ENCODE measurements at regions of chr12 and their contacts with region 1.

Region 1: GRCh38 chr12:121839106-121839992 is 19.3 kb downstream of the HPD start:
- DNase-seq: peak; percentile 98 to 100
- H3K4me3 ChIP-seq: peak overlapping the region; percentile 63
- H3K4me3 Mint-ChIP-seq: peak overlapping the region; percentile 86
- H3K27ac Mint-ChIP-seq: peak overlapping the region; percentile 72
- H3K4me1 ChIP-seq: 0 out of 2 replicates have a peak, but pooled peaks cover 4% of the 10 kb centered on the region
- H3K4me1 Mint-ChIP-seq: peaks cover 10% of the 10 kb centered on the region
- H3K27me3 ChIP-seq: no peaks in the 10 kb centered on the region
- H3K27me3 Mint-ChIP-seq: no peaks in the 10 kb centered on the region
- CTCF ChIP-seq: peak; percentile 47 to 77

Region 2: DNA sequence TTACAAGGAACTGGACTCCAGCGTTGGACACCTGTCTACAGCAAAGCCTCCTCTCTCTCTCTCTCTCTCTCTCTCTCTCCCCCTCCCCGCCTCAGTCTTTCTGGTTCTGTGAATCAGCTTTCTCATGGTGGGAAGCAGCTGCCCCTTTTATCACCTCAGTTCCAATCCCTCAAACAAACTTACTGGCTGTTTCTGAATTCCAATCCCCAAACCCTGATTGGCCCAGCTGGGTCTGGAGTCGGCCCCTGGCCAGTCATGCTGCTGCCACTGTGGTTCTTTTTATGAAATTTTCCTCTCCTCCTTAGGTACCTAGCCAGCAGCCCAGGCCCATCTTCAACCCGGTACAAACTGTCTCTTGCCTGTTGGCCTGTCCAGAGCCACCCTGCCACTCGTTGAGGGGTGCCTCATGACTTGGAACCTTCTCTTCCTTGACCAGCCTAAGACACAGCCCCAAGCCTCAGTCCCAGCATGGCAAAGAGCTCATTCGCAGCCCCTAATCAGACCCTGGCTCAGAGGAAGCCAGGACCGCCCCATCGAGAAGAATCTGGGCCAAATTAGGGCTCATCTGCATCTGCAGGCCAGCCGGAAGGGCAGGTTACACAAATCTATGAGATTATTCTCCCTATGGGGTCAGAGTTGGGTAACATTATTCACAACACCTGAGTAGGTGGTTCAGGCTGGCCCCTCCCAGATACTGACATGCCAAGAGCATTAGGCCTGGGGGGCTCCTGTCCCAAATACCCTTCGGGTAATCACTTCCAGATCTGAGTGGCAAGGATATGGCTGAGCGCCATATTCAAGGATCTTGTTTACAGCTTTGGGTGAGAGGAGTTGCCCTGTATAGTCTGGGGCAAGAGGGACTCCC is 160.4 kb before region 1 on chr12:
- CTCF ChIA-PET with region 1: no interaction called
- POLR2A ChIA-PET with region 1: no interaction called
- intact Hi-C with region 1: no loop called
- DNase-seq: no peak
- H3K4me3 ChIP-seq: no peak overlapping the region
- H3K4me3 Mint-ChIP-seq: no peak overlapping the region
- H3K27ac Mint-ChIP-seq: peak overlapping the region; percentile 73
- H3K4me1 ChIP-seq: peaks cover 6% of the 10 kb centered on the region; the same call in 1 of the 2 replicates
- H3K4me1 Mint-ChIP-seq: peaks cover 9% of the 10 kb centered on the region
- H3K27me3 ChIP-seq: no peaks in the 10 kb centered on the region
- H3K27me3 Mint-ChIP-seq: no peaks in the 10 kb centered on the region
- CTCF ChIP-seq: no peak

Region 3: GRCh38 chr12:121888478-121889266 is 49.3 kb after region 1 on chr12 and contains the start of gene PSMD9:
- CTCF ChIA-PET with region 1: interaction called, 7 read pairs
- POLR2A ChIA-PET with region 1: no interaction called
- intact Hi-C with region 1: loop called (anchors 1 kb)
- DNase-seq: peak; percentile 98 to 99
- H3K4me3 ChIP-seq: peak within 1 kb of the TSS; percentile 84
- H3K4me3 Mint-ChIP-seq: peak within 1 kb of the TSS; percentile 84
- H3K27ac Mint-ChIP-seq: peak within 1 kb of the TSS; percentile 86
- H3K4me1 ChIP-seq: peaks cover 10% of the 10 kb centered on the region
- H3K4me1 Mint-ChIP-seq: peaks cover 15% of the 10 kb centered on the region
- H3K27me3 ChIP-seq: no peaks in the 10 kb centered on the region
- H3K27me3 Mint-ChIP-seq: no peaks in the 10 kb centered on the region
- CTCF ChIP-seq: peak; percentile 50 to 78
- total RNA-seq, gene PSMD9: 53.0 and 63.3 TPM in 2 replicates

Measured in Caco-2 (cell line).